Mammary epithelial cell (primary cell): ENCODE measurements at regions of chr16 and their contacts with region 1.

Region 1: DNA sequence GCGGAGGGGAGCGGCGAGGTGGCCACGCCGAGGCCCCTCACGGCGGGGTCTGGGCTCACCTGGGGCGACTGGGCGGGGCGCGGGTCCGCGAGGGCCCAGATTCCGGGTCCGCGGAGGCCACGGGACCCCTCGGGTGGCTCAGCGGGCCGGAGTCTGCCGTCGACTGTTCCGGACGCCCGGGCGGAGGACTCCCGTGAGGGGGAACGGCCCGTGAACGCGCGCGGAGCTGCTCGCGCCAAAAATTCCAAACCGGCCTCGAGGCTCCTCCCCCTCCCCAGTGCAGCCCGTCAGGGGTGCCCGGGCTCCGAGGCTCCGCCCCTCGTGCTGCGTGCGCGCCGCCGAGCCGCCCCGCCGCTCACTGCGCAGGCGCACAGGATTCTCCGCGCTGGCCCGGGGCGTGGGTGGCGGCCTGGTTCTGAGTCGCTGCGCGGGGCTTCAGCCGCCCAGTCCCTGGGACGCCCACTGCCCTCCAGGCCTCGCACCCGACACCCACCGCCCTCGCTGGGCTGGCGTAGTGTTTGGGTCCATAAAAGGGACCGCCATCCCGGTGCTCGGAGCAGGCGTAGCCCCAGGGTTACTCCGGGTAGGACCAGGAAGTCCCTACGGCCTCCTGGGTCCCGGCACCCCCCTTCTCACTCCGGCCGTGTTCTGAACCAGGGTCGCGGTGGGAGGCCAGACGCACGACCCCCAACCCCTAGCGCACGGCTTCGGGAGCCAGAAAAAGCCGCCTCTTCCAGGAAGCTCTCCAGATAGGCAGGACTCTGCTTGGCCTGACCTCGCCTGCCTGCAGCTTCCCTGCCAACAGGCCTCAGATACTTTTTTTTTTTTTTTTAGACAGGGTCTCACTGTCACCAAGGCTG is at the start of gene PKMYT1:
- DNase-seq: peak; percentile 85
- H3K4me3 ChIP-seq: peak within 1 kb of the TSS; percentile 64 to 98 (median 84)
- H3K27ac ChIP-seq: peak within 1 kb of the TSS; percentile 48
- H3K4me1 ChIP-seq: peaks cover 27% of the 10 kb centered on the region
- H3K27me3 ChIP-seq: no peaks in the 10 kb centered on the region
- CTCF ChIP-seq: no peak
- total RNA-seq, gene PKMYT1: 4.2 to 67.2 TPM

Region 2: DNA sequence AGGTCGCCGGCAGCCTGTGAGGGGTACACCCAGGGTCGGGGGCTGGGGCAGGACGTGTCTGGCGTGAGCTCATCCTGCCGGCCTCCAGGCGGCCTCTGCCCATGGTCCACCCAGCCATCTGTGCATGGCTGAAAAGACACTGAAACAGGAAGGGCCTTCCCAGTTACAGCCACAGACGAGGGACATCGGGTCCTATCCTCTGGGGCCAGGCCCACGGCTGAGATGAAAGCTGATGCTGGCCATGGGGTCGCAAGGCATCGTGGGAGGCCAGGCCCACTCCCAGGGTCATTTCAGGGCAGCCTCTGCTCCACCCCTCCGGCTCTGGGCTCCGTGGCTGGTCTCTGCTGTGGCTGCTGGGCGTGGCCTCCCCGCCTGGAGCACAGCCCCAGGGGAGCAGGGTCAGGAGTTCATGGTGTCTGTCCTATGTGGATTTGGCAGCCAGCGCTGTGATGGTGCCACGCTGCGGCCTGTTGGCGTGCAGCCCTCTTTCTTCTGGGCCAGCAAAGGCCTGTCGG is 483.3 kb before region 1 on chr16:
- CTCF ChIA-PET with region 1: no interaction called
- dilution Hi-C with region 1: no loop called
- in situ Hi-C with region 1: no loop called
- intact Hi-C with region 1: no loop called
- DNase-seq: no peak
- H3K4me3 ChIP-seq: no peak overlapping the region
- H3K27ac ChIP-seq: no peak overlapping the region
- H3K4me1 ChIP-seq: peaks cover 7% of the 10 kb centered on the region
- H3K27me3 ChIP-seq: no peaks in the 10 kb centered on the region
- CTCF ChIP-seq: no peak

Region 3: GRCh38 chr16:2874912-2875362 is 105.5 kb before region 1 on chr16:
- CTCF ChIA-PET with region 1: interaction called, 7 read pairs
- dilution Hi-C with region 1: no loop called
- in situ Hi-C with region 1: no loop called
- intact Hi-C with region 1: loop called (anchors 1 kb)
- DNase-seq: peak; percentile 55
- H3K4me3 ChIP-seq: no peak overlapping the region
- H3K27ac ChIP-seq: no peak overlapping the region
- H3K4me1 ChIP-seq: no peaks in the 10 kb centered on the region
- H3K27me3 ChIP-seq: no peaks in the 10 kb centered on the region
- CTCF ChIP-seq: peak; percentile 89 to 90

Region 4: DNA sequence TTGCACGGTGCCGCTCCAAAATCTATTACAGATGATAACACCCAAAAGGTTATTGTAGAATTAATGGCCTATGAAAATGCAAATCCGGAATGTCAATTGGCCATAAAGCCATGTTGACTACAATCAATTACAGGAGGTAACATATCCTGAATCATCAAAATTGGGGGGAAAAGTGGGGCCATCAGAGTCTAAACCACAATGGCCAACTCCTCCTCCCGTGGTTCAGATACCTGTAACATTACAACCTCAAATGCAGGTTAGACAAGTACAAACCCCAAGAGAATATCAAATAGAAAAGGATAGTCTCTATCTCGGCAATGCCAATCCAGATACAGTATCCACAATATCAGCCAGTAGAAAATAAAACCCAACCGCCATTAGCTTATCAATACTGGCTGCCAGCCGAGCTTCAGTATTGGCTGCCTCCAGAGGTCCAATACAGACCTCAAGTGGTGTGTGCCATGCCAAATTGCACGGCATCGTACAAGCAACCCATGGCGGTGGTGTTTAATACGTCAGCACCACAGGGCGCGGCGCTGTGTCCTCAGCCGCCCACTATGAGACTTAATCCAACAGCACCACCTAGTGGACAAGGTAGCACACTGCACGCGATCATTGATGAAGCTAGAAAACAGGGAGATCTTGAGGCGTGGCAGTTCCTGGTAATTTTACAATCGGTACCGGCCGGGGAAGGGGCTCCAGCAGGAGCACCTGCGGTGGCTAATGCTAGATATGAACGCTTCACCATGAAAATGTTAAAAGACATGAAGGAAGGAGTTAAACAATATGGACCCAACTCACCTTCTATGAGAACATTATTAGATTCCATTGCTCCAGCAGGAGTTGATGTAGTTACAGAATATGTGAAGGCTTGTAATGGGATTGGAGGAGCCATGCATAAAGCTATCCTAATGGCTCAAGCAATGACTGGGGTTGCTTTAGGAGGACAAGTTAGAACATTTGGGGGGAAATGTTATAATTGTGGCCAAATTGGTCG is 53.5 kb before region 1 on chr16:
- CTCF ChIA-PET with region 1: no interaction called
- dilution Hi-C with region 1: no loop called
- in situ Hi-C with region 1: no loop called
- intact Hi-C with region 1: loop called (anchors 1 kb)
- DNase-seq: peak; percentile 78
- H3K4me3 ChIP-seq: peak overlapping the region in 1 of 3 experiments; percentile 12
- H3K27ac ChIP-seq: peak overlapping the region; percentile 26
- H3K4me1 ChIP-seq: peaks cover 18% of the 10 kb centered on the region
- H3K27me3 ChIP-seq: no peaks in the 10 kb centered on the region
- CTCF ChIP-seq: peak; percentile 93 to 95

Region 5: DNA sequence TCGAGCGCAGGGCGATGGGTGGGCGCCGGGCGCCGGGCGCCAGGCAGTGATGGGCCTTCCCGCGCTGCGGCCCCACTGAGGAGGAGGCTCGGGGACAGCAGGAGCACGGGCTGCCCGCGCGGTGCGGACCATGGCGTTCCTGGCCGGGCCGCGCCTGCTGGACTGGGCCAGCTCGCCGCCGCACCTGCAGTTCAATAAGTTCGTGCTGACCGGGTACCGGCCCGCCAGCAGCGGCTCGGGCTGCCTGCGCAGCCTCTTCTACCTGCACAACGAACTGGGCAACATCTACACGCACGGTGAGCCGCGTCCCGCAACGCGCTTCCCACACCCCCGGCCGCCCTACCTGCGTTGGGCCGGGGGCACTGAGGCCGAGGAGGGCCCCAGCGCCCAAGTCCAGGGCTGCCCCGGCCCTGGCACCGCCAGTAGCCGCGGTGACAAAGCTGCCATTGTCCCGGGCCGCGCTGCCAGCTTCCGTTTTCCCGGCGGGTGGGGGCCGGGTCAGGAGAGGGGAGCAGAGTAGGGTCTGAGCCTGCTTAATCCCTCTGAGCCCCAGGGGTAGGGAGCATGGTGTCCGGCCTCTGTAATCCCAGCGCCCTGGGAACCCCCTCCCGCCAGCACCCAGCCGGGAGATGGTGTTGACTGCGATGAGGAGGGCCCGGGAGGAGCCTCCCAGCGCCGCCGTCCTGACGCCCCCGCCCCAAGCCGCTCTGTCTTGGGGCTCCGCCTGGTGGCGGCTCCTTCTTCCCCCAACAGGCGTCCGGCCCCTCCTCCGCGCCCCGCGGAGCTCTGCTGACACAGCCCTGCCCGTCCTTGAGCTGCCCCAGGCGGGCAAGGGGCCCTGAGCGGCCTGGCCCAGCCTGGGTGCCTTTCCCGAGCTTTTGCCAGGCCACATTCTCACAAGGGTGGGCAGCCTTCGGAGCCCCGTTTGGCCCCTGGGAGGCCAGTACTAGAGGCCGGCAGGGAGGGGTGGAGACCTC is 10.6 kb before region 1 on chr16:
- CTCF ChIA-PET with region 1: no interaction called
- dilution Hi-C with region 1: no loop called
- in situ Hi-C with region 1: no loop called
- intact Hi-C with region 1: loop called (anchors 1 kb)
- DNase-seq: peak; percentile 73
- H3K4me3 ChIP-seq: peak overlapping the region; percentile 63 to 88 (median 72)
- H3K27ac ChIP-seq: peak overlapping the region; percentile 45
- H3K4me1 ChIP-seq: peaks cover 36% of the 10 kb centered on the region
- H3K27me3 ChIP-seq: no peaks in the 10 kb centered on the region
- CTCF ChIP-seq: peak; percentile 20 to 68